Heart right ventricle (tissue), 16 donors: ENCODE measurements at regions of chr5 and their contacts with region 1.

Region 1: GRCh38 chr5:98614341-98614740 is 159.1 kb upstream of the RGMB start:
- DNase-seq: no peak
- ATAC-seq: no peak
- H3K4me3 ChIP-seq: no peak overlapping the region
- H3K27ac ChIP-seq: no peak overlapping the region
- H3K4me1 ChIP-seq: peaks cover 0 to 3% (median 0%) of the 10 kb centered on the region in 9 donors
- H3K27me3 ChIP-seq: no peaks in the 10 kb centered on the region
- CTCF ChIP-seq: no peak

Region 2: DNA sequence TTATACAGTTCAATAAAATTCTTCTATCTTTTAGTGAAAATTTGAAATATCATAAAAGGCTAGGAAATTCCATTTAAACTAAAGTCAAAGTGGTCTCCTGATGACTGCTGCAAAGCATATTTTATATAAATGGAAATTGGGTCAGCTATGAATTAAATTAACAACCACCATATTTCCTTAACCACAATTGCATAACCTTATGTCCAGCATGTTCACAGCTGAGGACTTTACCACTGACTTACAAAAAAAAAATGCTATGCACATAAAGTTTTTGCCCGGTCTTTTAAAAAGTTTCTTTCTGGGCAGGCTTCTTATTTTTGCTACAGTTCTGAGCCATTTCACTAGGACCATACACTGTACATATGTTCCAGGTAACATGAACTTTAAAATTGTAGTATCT is 49.5 kb before region 1 on chr5:
- intact Hi-C with region 1: loop called in 1 of 10 experiments (anchors 1 kb)
- DNase-seq: no peak
- ATAC-seq: no peak
- H3K4me3 ChIP-seq: no peak overlapping the region
- H3K27ac ChIP-seq: no peak overlapping the region
- H3K4me1 ChIP-seq: no peaks in the 10 kb centered on the region
- H3K27me3 ChIP-seq: no peaks in the 10 kb centered on the region
- CTCF ChIP-seq: no peak

Region 3: GRCh38 chr5:98705841-98706240 is 91.5 kb after region 1 on chr5:
- intact Hi-C with region 1: no loop called
- DNase-seq: no peak
- ATAC-seq: no peak
- H3K4me3 ChIP-seq: no peak overlapping the region
- H3K27ac ChIP-seq: no peak overlapping the region
- H3K4me1 ChIP-seq: no peaks in the 10 kb centered on the region
- H3K27me3 ChIP-seq: no peaks in the 10 kb centered on the region
- CTCF ChIP-seq: no peak

Region 4: GRCh38 chr5:98763001-98763630 is 148.8 kb after region 1 on chr5:
- intact Hi-C with region 1: no loop called
- DNase-seq: no peak
- ATAC-seq: no peak
- H3K4me3 ChIP-seq: no peak overlapping the region
- H3K27ac ChIP-seq: no peak overlapping the region
- H3K4me1 ChIP-seq: peaks cover 0 to 10% (median 0%) of the 10 kb centered on the region in 9 donors
- H3K27me3 ChIP-seq: peaks cover 0 to 56% (median 9%) of the 10 kb centered on the region in 7 donors
- CTCF ChIP-seq: no peak